Activated naive CD8-positive, alpha-beta T cell treated with anti-CD3 and anti-CD28 coated beads, Interleukin-2, amount 10 ng/mL, durations not matched to agents 7 days and 5 days (primary cell): ENCODE measurements at regions of chr2 and their contacts with region 1.

Region 1: GRCh38 chr2:10688921-10689807 is 611 bp downstream of the NOL10 start:
- DNase-seq: no peak
- ATAC-seq: peak; percentile 34
- H3K4me3 Mint-ChIP-seq: no peak overlapping the region
- H3K27ac Mint-ChIP-seq: no peak overlapping the region
- H3K4me1 Mint-ChIP-seq: peaks cover 13% of the 10 kb centered on the region
- H3K27me3 Mint-ChIP-seq: no peaks in the 10 kb centered on the region

Region 2: DNA sequence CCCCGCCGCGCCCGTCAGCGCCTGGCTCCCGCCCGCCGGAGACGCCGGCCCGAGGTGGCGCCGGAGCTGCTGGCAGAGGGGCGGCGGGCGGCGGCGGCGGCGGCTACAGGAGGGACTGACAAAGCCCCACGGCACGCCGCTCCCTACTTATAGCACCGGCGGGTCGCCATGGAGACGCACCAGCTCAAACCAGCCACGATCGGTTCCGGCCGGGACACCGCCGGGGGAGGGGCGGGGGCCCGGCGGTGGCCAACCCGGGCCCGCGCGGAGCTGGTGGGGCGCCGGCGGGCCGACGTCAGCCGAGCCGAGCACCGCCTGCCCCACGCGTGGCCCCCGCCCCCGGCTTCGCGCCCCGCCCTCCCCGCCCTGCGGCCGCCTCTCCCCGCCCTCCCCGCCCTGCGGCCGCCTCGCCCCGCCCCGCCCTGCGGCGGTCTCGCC is 240.9 kb before region 1 on chr2 and contains the start of gene ODC1:
- POLR2A ChIA-PET with region 1: interaction called, 11 read pairs
- DNase-seq: peak; percentile 93
- ATAC-seq: peak; percentile 84
- H3K4me3 Mint-ChIP-seq: peak within 1 kb of the TSS; percentile 97
- H3K27ac Mint-ChIP-seq: peak within 1 kb of the TSS; percentile 94
- H3K4me1 Mint-ChIP-seq: peaks cover 32% of the 10 kb centered on the region
- H3K27me3 Mint-ChIP-seq: no peaks in the 10 kb centered on the region
- total RNA-seq, gene ODC1: 42.0 to 43.8 TPM

Region 3: DNA sequence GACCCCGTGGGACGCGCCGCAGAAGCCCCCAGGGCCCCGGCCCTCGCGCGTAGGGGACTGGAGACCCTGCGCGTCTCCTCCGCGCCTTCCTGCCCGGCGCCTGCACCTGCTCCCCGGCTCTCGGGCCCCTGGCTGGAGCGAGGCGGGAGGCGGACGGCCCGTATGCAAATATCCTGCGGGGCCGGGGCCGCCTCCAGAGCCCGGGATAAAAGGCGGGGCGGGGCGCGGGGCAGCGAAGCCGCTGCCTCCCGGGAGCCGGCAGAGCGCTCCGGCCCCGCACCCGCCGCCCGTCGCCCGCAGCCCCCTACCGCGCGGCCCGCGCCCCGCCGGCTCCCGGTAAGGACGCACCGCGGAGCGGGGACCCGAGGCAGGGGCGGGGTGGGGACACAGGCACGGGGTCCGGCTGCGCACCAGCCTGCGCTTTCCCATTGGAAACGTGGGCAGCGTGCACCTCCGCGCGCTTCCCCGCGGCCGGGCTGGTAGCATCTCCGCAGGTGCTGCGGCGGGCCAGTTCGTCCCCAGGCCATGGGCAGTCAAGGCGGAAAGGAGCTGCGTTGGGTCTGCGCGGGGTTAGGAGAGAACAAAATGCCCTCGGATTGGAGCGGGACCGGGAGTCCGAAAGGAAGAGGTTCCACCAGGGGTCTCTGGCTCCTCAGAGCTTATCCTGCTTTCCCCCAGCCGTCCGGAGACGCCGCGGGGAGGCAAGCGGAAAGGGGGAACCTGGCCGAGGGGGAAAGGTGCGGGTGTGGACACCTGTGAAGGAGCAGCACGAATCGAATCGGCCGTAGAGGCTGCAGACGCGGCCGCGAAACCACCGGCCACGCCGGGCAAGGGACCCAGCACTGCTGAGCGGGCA is 32.5 kb after region 1 on chr2 and contains the start of gene ATP6V1C2:
- POLR2A ChIA-PET with region 1: no interaction called
- DNase-seq: peak; percentile 49
- ATAC-seq: peak; percentile 72
- H3K4me3 Mint-ChIP-seq: peak within 1 kb of the TSS; percentile 48
- H3K27ac Mint-ChIP-seq: no peak within 1 kb of the TSS
- H3K4me1 Mint-ChIP-seq: peaks cover 5% of the 10 kb centered on the region
- H3K27me3 Mint-ChIP-seq: peaks cover 85% of the 10 kb centered on the region
- total RNA-seq, gene ATP6V1C2: not detected

Region 4: GRCh38 chr2:10909050-10909995 is 220.2 kb after region 1 on chr2:
- POLR2A ChIA-PET with region 1: no interaction called
- DNase-seq: no peak
- ATAC-seq: no peak
- H3K4me3 Mint-ChIP-seq: no peak overlapping the region
- H3K27ac Mint-ChIP-seq: no peak overlapping the region
- H3K4me1 Mint-ChIP-seq: peaks cover 1% of the 10 kb centered on the region
- H3K27me3 Mint-ChIP-seq: peaks cover 30% of the 10 kb centered on the region